AG04450 (cell line): ENCODE measurements at regions of chr17 and their contacts with region 1.

Region 1: DNA sequence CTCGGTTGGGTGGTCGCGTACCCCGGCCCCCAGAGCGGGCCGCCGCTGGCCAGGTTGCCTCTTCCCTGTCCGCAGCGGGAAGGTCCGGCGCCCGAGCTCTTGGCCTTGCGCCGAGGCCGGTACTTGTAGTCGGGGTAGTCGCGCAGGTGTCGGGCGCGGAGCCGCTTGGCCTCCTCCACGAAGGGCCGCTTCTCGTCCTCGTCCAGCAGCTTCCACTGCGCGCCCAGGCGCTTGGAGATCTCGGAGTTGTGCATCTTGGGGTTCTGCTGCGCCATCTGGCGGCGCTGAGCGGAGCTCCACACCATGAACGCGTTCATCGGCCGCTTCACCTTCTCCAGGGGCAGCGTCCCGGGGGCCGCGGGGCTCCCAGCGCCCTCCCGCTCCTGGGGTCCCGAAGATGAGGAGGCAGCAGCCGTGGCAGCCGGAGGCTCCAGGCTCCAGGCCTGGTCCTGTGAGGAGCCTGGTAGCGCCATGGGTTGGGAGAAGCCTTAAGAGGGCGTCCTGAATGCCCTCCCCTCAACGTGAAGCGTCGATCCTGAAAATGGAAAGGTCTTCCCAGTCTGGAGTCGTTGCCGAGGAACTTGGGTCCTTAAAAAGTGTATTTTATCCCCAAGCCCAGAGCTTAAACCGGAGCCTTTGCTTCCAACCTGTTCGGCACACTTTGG is 558 bp downstream of the SOX15 start:
- DNase-seq: no peak
- H3K4me3 ChIP-seq: peak overlapping the region; percentile 34
- H3K27ac ChIP-seq: peak overlapping the region; percentile 94
- H3K27me3 ChIP-seq: no peaks in the 10 kb centered on the region
- CTCF ChIP-seq: peak; percentile 87

Region 2: DNA sequence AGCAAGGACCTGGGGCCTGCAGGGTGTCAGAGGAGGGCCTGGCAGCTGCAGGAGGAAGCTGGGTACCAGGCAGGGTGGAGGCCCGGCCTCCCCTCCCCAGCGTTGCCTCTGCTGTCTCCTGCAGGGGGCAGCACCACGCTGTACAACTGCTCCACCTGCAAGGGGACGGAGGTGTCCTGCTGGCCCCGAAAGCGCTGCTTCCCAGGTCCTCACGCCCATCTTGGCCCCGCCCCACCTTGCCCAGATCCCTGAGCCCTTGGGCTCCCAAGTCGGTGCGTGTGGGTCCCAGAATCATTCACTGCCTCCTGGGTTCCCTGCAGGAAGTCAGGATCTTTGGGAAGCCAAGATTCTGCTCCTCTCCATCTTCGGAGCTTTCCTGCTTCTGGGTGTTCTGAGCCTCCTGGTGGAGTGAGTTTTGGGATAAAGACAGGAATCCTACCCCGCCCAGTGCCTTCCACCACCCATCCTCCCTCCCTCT is 233.2 kb before region 1 on chr17:
- CTCF ChIA-PET with region 1: interaction called, 10 read pairs
- POLR2A ChIA-PET with region 1: no interaction called
- DNase-seq: no peak
- H3K4me3 ChIP-seq: no peak overlapping the region
- H3K27ac ChIP-seq: no peak overlapping the region
- H3K27me3 ChIP-seq: no peaks in the 10 kb centered on the region
- CTCF ChIP-seq: peak; percentile 71

Region 3: DNA sequence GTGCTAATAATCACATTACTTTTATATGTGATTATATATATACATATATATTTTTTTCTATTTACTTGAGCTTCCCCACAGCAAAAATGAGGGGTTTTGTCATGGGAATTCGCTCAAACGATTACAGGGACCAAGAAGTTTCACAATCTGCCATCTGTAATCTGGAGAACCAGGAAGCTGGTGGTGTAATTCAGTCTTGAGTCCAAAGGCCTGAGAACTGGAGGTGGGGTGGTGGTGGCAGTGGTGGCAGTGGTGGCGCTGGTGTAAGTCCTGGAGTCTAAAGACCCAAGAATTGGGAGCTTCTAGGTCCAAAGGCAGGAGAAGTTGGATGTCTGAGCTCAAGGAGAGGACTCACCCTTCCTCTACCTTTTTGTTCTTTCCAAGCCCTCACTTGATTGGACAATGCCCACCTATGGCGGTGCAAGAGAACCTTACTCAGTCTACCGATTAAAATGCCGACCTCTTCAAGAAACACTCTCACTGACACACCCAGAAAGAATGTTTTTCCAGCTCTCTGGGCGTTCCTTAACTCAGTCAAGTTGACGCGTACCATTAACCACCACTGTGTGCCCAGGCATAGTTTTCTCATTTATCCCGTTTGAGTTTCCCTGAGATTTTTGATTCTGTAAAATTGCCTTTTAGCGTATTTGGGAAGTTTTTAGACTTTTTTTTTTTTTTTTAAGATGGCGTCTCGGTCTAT is 73.3 kb before region 1 on chr17:
- CTCF ChIA-PET with region 1: interaction called, 29 read pairs
- POLR2A ChIA-PET with region 1: no interaction called
- DNase-seq: no peak
- H3K4me3 ChIP-seq: no peak overlapping the region
- H3K27ac ChIP-seq: no peak overlapping the region
- H3K27me3 ChIP-seq: no peaks in the 10 kb centered on the region
- CTCF ChIP-seq: no peak

Region 4: DNA sequence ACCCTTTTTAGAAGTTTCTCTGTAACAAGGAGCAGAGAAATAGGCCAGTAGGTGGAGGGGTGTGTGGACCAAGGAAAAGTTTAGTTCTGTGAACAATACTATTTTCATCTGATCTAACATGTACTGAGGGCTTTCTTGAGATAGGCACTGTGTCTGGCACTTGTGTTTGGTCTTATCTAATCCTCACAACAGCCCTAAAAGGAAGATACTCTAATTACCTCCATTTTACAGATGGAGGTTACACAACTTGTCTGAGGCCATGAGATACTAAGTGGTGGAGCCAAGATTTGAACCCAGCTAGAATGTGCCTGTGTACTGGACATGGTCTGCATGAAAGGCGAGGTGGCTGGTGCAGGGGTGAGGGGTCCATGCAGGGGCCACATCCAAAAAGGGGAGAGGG is 36.0 kb before region 1 on chr17:
- CTCF ChIA-PET with region 1: no interaction called
- POLR2A ChIA-PET with region 1: no interaction called
- DNase-seq: no peak
- H3K4me3 ChIP-seq: no peak overlapping the region
- H3K27ac ChIP-seq: no peak overlapping the region
- H3K27me3 ChIP-seq: no peaks in the 10 kb centered on the region
- CTCF ChIP-seq: no peak

Region 5: GRCh38 chr17:7572588-7573323 is 16.6 kb before region 1 on chr17:
- CTCF ChIA-PET with region 1: interaction called, 7 read pairs
- POLR2A ChIA-PET with region 1: interaction called, 44 read pairs
- DNase-seq: peak; percentile 98
- H3K4me3 ChIP-seq: peak overlapping the region; percentile 98
- H3K27ac ChIP-seq: peak overlapping the region; percentile 96
- H3K27me3 ChIP-seq: no peaks in the 10 kb centered on the region
- CTCF ChIP-seq: peak; percentile 6; the same call in 1 of the 2 replicates

Region 6: DNA sequence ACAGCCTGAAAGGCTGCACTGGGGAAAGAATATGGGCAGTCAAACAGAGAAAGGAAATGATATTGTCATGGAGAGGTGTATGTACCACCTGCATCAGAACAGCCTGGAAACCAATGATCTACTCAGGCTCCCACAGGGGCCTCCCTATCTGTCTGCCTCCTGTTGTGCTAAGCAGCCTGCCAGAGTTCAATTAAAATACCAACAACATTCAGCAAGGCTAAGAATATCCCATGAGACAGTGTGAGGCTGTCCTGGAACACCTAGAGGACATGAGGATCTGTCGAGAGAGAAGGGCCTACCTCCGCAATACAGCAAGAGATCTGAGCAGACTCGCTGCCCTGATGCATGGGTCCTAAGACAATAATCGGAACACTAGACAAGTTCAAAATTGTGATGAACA is 16.9 kb after region 1 on chr17:
- CTCF ChIA-PET with region 1: interaction called, 21 read pairs
- POLR2A ChIA-PET with region 1: interaction called, 3 read pairs
- DNase-seq: no peak
- H3K4me3 ChIP-seq: no peak overlapping the region
- H3K27ac ChIP-seq: no peak overlapping the region
- H3K27me3 ChIP-seq: no peaks in the 10 kb centered on the region
- CTCF ChIP-seq: no peak

Region 7: GRCh38 chr17:7614422-7615264 is 25.3 kb after region 1 on chr17 and contains the start of gene FXR2:
- CTCF ChIA-PET with region 1: interaction called, 20 read pairs
- POLR2A ChIA-PET with region 1: interaction called, 3 read pairs
- DNase-seq: peak; percentile 100
- H3K4me3 ChIP-seq: peak within 1 kb of the TSS; percentile 86
- H3K27ac ChIP-seq: peak within 1 kb of the TSS; percentile 80
- H3K27me3 ChIP-seq: peaks cover under 1% of the 10 kb centered on the region
- CTCF ChIP-seq: peak; percentile 66
- polyA plus RNA-seq, gene FXR2: 24.6 and 29.4 TPM in 2 replicates

Region 8: DNA sequence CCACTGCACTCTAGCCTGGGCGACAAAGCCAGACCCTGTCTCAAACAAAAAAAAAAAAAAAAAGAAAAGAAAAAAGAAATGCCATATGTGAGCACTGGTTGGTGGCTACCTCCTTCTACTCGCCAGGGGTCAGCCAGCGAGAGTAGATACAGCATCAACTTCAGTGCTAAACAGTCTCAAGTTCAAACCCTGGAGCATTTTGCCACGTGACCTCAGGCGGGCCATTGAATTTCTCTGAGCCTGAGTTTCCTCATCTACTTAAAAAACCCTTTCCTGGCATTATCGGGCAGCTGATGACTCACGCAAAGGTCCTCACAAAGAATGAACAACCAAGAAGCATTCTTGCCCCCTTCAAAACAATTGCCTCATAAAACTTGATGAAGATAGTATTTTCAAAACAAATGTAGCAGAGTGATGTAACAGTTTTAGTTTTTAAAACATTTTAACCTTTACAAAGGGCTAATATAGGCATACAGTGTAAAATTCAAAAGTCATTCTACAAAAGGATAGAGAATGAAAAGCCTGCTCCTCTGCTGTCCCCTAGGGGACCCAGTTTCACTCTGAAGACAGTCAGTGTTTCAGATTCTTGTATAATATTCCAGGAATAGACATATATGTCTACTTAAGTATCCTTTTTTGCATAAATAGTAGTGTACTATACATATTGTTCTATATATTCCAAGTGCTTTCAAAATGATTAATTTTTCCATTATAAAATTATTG is 156.6 kb after region 1 on chr17:
- CTCF ChIA-PET with region 1: no interaction called
- POLR2A ChIA-PET with region 1: no interaction called
- DNase-seq: peak; percentile 41
- H3K4me3 ChIP-seq: no peak overlapping the region
- H3K27ac ChIP-seq: no peak overlapping the region
- H3K27me3 ChIP-seq: no peaks in the 10 kb centered on the region
- CTCF ChIP-seq: peak; percentile 14; the same call in 1 of the 2 replicates